Esophagus squamous epithelium (tissue), 5 donors: ENCODE measurements at regions of chr10 and their contacts with region 1.

Region 1: GRCh38 chr10:128078136-128078969 is 47.9 kb downstream of the MKI67 start:
- DNase-seq: no peak
- H3K4me3 ChIP-seq: no peak overlapping the region
- H3K27ac ChIP-seq: no peak overlapping the region
- H3K4me1 ChIP-seq: no peaks in the 10 kb centered on the region
- H3K27me3 ChIP-seq: no peaks in the 10 kb centered on the region
- CTCF ChIP-seq: peak; percentile 21 to 61 (median 42)
- POLR2A ChIP-seq: no peak

Region 2: GRCh38 chr10:127922675-127923366 is 155.5 kb before region 1 on chr10:
- intact Hi-C with region 1: no loop called
- DNase-seq: no peak
- H3K4me3 ChIP-seq: no peak overlapping the region
- H3K27ac ChIP-seq: peak overlapping the region in 2 of 4 donors; percentile 17 to 39
- H3K4me1 ChIP-seq: peaks cover 0 to 35% (median 11%) of the 10 kb centered on the region in 3 donors
- H3K27me3 ChIP-seq: no peaks in the 10 kb centered on the region
- CTCF ChIP-seq: no peak
- POLR2A ChIP-seq: no peak

Region 3: DNA sequence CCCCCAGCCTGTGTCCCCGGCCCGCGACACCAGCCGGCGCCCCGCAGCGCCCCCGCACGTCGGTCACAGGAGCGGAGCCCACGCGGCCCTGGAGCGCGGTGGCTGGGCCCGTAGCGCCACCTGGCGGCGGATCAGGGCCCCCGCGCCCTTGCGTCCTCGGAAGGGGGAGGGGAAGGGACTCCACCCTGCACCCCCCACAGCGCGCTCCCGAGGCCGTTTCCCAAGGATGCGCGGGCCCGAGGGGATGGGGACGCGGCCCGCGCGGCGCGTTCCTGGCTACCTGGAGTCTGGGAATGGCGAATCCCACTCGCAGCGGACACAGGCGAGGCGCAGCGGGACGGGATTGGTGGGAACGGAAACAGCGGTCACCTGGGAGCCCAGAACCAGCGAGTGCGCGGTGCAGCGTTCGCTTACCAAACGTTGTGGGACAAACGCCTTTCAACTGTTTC is 71.7 kb after region 1 on chr10:
- intact Hi-C with region 1: loop called (anchors 5 kb)
- DNase-seq: no peak
- H3K4me3 ChIP-seq: peak overlapping the region; percentile 30 to 65 (median 46)
- H3K27ac ChIP-seq: no peak overlapping the region
- H3K4me1 ChIP-seq: peaks cover 0 to 14% (median 10%) of the 10 kb centered on the region in 3 donors
- H3K27me3 ChIP-seq: peaks cover 0 to 66% (median 0%) of the 10 kb centered on the region in 4 donors
- CTCF ChIP-seq: peak; percentile 74 to 96 (median 87)
- POLR2A ChIP-seq: no peak